ENCODE measurements at regions of chr10 and their contacts with region 1.

Region 1: GRCh38 chr10:35316218-35316967 is 19.9 kb upstream of the CCNY start:
- DNase-seq: no peak
- CTCF ChIP-seq: no peak

Region 2: GRCh38 chr10:34922143-34922542 is 394.2 kb before region 1 on chr10:
- CTCF ChIA-PET with region 1: no interaction called
- POLR2A ChIA-PET with region 1: no interaction called
- DNase-seq: no peak
- CTCF ChIP-seq: no peak

Region 3: DNA sequence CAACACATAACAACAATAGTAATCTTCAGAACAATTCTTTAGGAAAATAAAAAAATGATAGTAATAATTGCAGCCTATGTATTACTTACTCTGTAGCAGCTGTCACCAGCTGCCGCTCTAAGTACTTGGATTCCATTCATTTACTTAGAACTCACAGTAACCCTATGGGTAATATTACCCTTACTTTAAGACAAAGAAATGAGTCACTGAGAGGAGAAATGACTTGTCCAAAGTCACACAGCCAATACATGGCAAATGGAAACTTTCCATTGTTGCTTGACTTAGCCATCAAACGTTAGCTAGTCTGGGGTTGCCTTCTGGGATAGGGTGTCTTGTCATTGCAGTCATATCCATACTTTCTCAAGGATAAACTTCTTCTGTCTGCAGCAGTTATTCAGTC is 23.5 kb after region 1 on chr10:
- CTCF ChIA-PET with region 1: no interaction called
- POLR2A ChIA-PET with region 1: interaction called, 11 read pairs
- DNase-seq: no peak
- CTCF ChIP-seq: no peak